ENCODE measurements at regions of chr5 and their contacts with region 1.

Region 1: GRCh38 chr5:119255571-119256356 is 100.1 kb upstream of the TNFAIP8 start:
- DNase-seq: peak; percentile 67
- ATAC-seq: peak; percentile 99
- H3K4me3 Mint-ChIP-seq: no peak overlapping the region
- H3K27ac Mint-ChIP-seq: peak overlapping the region; percentile 66
- H3K4me1 Mint-ChIP-seq: peaks cover 7% of the 10 kb centered on the region
- H3K27me3 Mint-ChIP-seq: no peaks in the 10 kb centered on the region; the same call in 1 of the 2 replicates
- CTCF ChIP-seq: no peak; the same call in 1 of the 2 replicates

Region 2: GRCh38 chr5:118987988-118988865 is 267.5 kb before region 1 on chr5 and contains the start of gene DTWD2:
- CTCF ChIA-PET with region 1: interaction called, 34 read pairs
- POLR2A ChIA-PET with region 1: no interaction called
- DNase-seq: peak; percentile 95
- ATAC-seq: peak; percentile 99
- H3K4me3 Mint-ChIP-seq: peak within 1 kb of the TSS; percentile 67
- H3K27ac Mint-ChIP-seq: peak within 1 kb of the TSS; percentile 53
- H3K4me1 Mint-ChIP-seq: peaks cover 14% of the 10 kb centered on the region
- H3K27me3 Mint-ChIP-seq: no peaks in the 10 kb centered on the region; the same call in 1 of the 2 replicates
- CTCF ChIP-seq: peak; percentile 85
- total RNA-seq, gene DTWD2: 10.3 to 13.1 TPM (median 10.4 TPM) in 3 replicates

Region 3: GRCh38 chr5:119022017-119022745 is 233.6 kb before region 1 on chr5:
- CTCF ChIA-PET with region 1: interaction called, 15 read pairs
- POLR2A ChIA-PET with region 1: no interaction called
- DNase-seq: no peak
- ATAC-seq: peak; percentile 73
- H3K4me3 Mint-ChIP-seq: no peak overlapping the region
- H3K27ac Mint-ChIP-seq: no peak overlapping the region
- H3K4me1 Mint-ChIP-seq: peaks cover 3% of the 10 kb centered on the region; the same call in 1 of the 2 replicates
- H3K27me3 Mint-ChIP-seq: no peaks in the 10 kb centered on the region
- CTCF ChIP-seq: peak; percentile 30

Region 4: GRCh38 chr5:119200795-119201194 is 55.0 kb before region 1 on chr5:
- CTCF ChIA-PET with region 1: no interaction called
- POLR2A ChIA-PET with region 1: no interaction called
- DNase-seq: no peak
- ATAC-seq: no peak
- H3K4me3 Mint-ChIP-seq: no peak overlapping the region
- H3K27ac Mint-ChIP-seq: peak overlapping the region; percentile 5
- H3K4me1 Mint-ChIP-seq: no peaks in the 10 kb centered on the region
- H3K27me3 Mint-ChIP-seq: no peaks in the 10 kb centered on the region
- CTCF ChIP-seq: no peak

Region 5: GRCh38 chr5:119267958-119268386 is 12.2 kb after region 1 on chr5:
- CTCF ChIA-PET with region 1: interaction called, 12 read pairs
- POLR2A ChIA-PET with region 1: no interaction called
- DNase-seq: peak; percentile 90
- ATAC-seq: peak; percentile 74
- H3K4me3 Mint-ChIP-seq: peak overlapping the region; percentile 96
- H3K27ac Mint-ChIP-seq: peak overlapping the region; percentile 86
- H3K4me1 Mint-ChIP-seq: peaks cover 28% of the 10 kb centered on the region
- H3K27me3 Mint-ChIP-seq: peaks cover 23% of the 10 kb centered on the region
- CTCF ChIP-seq: no peak

Region 6: DNA sequence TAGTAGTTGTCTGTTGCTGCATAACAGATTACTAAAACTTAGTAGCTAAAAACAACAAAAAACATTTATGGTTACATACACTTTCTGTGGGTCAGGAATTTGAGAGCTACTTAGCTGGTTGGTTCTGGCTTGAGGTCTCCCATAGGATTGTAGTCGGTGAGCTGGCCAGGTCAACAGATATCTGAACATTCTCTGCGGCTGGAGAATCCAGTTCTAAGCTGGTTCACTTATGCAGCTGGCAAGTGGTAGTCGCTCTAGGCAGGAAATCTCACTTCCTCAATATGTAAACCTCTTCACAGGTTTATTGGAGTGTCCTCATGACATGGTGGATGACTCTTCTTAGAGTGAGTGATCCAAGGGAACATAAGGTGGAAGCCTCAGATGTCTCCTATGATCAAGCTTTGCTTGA is 34.4 kb after region 1 on chr5:
- CTCF ChIA-PET with region 1: no interaction called
- POLR2A ChIA-PET with region 1: no interaction called
- DNase-seq: no peak
- ATAC-seq: peak; percentile 38; the same call in 1 of the 2 replicates
- H3K4me3 Mint-ChIP-seq: no peak overlapping the region
- H3K27ac Mint-ChIP-seq: no peak overlapping the region
- H3K4me1 Mint-ChIP-seq: peaks cover 35% of the 10 kb centered on the region
- H3K27me3 Mint-ChIP-seq: no peaks in the 10 kb centered on the region
- CTCF ChIP-seq: no peak